Naive thymus-derived CD4-positive, alpha-beta T cell (primary cell): ENCODE measurements at regions of chr15 and their contacts with region 1.

Region 1: GRCh38 chr15:31435261-31435911 is 108.8 kb downstream of the KLF13 start:
- DNase-seq: peak; percentile 53 to 93 (median 87)
- ATAC-seq: peak; percentile 84
- H3K4me3 ChIP-seq: peak overlapping the region; percentile 48
- H3K4me3 Mint-ChIP-seq: peak overlapping the region; percentile 80 to 95 (median 86)
- H3K27ac ChIP-seq: peak overlapping the region; percentile 83
- H3K27ac Mint-ChIP-seq: peak overlapping the region; percentile 96 to 100 (median 99)
- H3K4me1 ChIP-seq: peaks cover 55 to 58% of the 10 kb centered on the region in 2 donors
- H3K4me1 Mint-ChIP-seq: peaks cover 44 to 90% (median 84%) of the 10 kb centered on the region in 7 donors
- H3K27me3 ChIP-seq: no peaks in the 10 kb centered on the region
- H3K27me3 Mint-ChIP-seq: no peaks in the 10 kb centered on the region

Region 2: DNA sequence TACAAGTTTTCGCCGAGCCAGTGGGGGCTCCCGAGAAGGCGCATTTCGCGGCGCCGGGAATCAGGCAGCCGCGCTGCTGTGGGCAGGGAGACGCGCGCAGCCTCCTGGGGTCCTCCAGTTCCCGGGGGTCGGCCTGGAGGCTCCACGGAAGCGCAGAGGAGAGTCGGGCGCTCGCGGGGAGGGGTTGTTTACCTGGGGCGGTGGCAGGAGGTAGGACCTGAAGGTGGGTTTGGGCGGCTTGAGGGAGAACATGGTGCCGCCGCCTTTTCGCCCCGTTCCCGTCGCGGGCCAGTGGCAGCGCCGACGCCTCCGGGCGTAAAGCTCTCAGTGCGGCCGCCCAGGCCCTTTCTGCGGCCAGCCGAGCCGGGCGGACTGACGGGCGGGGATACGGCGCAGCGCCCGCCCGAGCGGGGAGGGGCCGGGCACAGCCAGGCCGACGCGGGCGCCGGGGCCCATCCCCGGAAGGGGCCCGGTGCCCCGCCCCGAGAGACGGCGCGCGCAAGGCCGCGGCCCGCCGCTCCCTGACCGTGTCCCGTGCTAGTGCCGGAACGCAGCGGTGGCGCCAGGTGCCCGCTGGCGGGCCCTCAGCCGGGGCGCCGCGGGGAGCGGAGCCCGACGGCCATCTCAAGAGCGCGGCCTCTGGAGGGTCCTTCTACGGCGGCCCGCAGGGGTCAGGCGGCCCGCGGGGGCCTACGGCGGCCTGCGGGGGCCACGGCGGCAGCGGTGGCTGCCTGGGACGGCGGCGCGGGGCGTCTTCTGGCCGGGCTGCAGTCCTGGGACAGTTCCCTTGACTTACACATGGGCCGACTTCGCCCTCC is 443.9 kb before region 1 on chr15 and contains the start of gene MTMR10:
- CTCF ChIA-PET with region 1: no interaction called
- POLR2A ChIA-PET with region 1: no interaction called
- intact Hi-C with region 1: loop called in 1 of 2 experiments (anchors 1 kb)
- DNase-seq: peak; percentile 54 to 84 (median 82)
- ATAC-seq: peak; percentile 96
- H3K4me3 ChIP-seq: peak within 1 kb of the TSS; percentile 96
- H3K4me3 Mint-ChIP-seq: peak within 1 kb of the TSS; percentile 91 to 97 (median 95)
- H3K27ac ChIP-seq: peak within 1 kb of the TSS; percentile 89
- H3K27ac Mint-ChIP-seq: peak within 1 kb of the TSS; percentile 90 to 98 (median 93)
- H3K4me1 ChIP-seq: peaks cover 23 to 27% of the 10 kb centered on the region in 2 donors
- H3K4me1 Mint-ChIP-seq: peaks cover 22 to 49% (median 37%) of the 10 kb centered on the region in 7 donors
- H3K27me3 ChIP-seq: no peaks in the 10 kb centered on the region
- H3K27me3 Mint-ChIP-seq: peaks cover 0 to 13% (median 0%) of the 10 kb centered on the region in 5 donors
- total RNA-seq, gene MTMR10: 21.2 to 50.8 (median 34.0) TPM

Region 3: GRCh38 chr15:31241888-31242522 is 193.4 kb before region 1 on chr15:
- CTCF ChIA-PET with region 1: no interaction called
- POLR2A ChIA-PET with region 1: interaction called, 3 read pairs
- intact Hi-C with region 1: loop called in 1 of 2 experiments (anchors 1 kb)
- DNase-seq: peak in 5 of 9 donors; percentile 47 to 78 (median 65)
- ATAC-seq: peak; percentile 95
- H3K4me3 ChIP-seq: no peak overlapping the region
- H3K4me3 Mint-ChIP-seq: peak overlapping the region; percentile 2 to 74 (median 50)
- H3K27ac ChIP-seq: peak overlapping the region; percentile 32
- H3K27ac Mint-ChIP-seq: peak overlapping the region; percentile 36 to 97 (median 90)
- H3K4me1 ChIP-seq: peaks cover 13 to 28% of the 10 kb centered on the region in 2 donors
- H3K4me1 Mint-ChIP-seq: peaks cover 34 to 49% (median 42%) of the 10 kb centered on the region in 7 donors
- H3K27me3 ChIP-seq: no peaks in the 10 kb centered on the region
- H3K27me3 Mint-ChIP-seq: peaks cover 0 to 3% (median 0%) of the 10 kb centered on the region in 5 donors

Region 4: GRCh38 chr15:31365655-31366127 is 69.7 kb before region 1 on chr15:
- CTCF ChIA-PET with region 1: interaction called, 54 read pairs
- POLR2A ChIA-PET with region 1: interaction called, 210 read pairs
- intact Hi-C with region 1: loop called (anchors 1 kb)
- DNase-seq: peak; percentile 53 to 82 (median 78)
- ATAC-seq: peak; percentile 68
- H3K4me3 ChIP-seq: peak overlapping the region; percentile 36
- H3K4me3 Mint-ChIP-seq: peak overlapping the region; percentile 72 to 88 (median 85)
- H3K27ac ChIP-seq: peak overlapping the region; percentile 94
- H3K27ac Mint-ChIP-seq: peak overlapping the region; percentile 92 to 99 (median 97)
- H3K4me1 ChIP-seq: peaks cover 87% of the 10 kb centered on the region in 2 donors
- H3K4me1 Mint-ChIP-seq: peaks cover 85 to 100% (median 99%) of the 10 kb centered on the region in 7 donors
- H3K27me3 ChIP-seq: no peaks in the 10 kb centered on the region
- H3K27me3 Mint-ChIP-seq: no peaks in the 10 kb centered on the region

Region 5: DNA sequence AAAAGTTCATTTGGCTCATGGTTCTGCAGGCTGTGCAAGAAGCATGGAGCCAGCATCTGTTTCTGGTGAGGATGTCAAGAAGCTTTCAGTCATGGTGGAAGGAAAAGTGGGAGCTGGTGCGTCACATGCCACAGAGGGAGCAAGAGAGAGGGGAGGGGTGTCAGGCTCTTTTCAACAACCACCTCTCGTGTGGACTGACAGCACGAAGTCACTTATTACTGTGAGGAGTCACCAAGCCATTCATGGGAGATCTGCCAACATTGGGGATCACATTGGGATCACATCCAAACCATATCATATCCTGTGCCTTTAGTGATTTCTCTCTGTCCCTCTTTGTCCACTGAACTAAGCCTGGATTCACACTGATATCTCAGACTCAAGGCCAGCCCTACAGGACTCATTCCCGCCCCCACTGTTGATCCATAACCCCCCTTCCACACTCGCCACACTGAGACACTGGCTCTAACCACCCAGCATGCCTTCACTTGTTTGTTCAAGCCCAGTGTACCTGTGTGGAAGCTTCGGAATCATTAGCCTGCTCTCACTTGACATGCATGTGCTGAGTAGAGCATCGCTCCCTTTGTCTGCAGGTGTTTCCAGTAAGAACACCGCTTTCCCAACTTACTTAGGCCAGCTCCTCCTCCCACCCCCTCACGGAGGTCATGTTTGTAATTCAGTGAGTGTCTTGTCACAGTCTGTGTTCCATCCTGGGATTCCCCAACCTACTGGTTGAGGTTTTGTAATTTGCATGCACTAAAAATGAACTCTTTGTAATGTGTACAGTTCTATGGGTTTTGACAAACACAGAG is 23.4 kb after region 1 on chr15:
- CTCF ChIA-PET with region 1: interaction called, 4 read pairs
- POLR2A ChIA-PET with region 1: interaction called, 17 read pairs
- intact Hi-C with region 1: loop called (anchors 1 to 2 kb)
- DNase-seq: peak in 3 of 9 donors; percentile 19 to 64 (median 32)
- ATAC-seq: peak; percentile 83
- H3K4me3 ChIP-seq: no peak overlapping the region
- H3K4me3 Mint-ChIP-seq: peak overlapping the region in 4 of 10 donors; percentile 0 to 72 (median 4)
- H3K27ac ChIP-seq: no peak overlapping the region
- H3K27ac Mint-ChIP-seq: peak overlapping the region in 7 of 9 donors; percentile 4 to 82 (median 70)
- H3K4me1 ChIP-seq: peaks cover 0 to 8% of the 10 kb centered on the region in 2 donors
- H3K4me1 Mint-ChIP-seq: peaks cover 5 to 33% (median 28%) of the 10 kb centered on the region in 7 donors
- H3K27me3 ChIP-seq: no peaks in the 10 kb centered on the region
- H3K27me3 Mint-ChIP-seq: no peaks in the 10 kb centered on the region

Region 6: GRCh38 chr15:31488426-31489204 is 53.2 kb after region 1 on chr15:
- CTCF ChIA-PET with region 1: interaction called, 65 read pairs
- POLR2A ChIA-PET with region 1: interaction called, 54 read pairs
- intact Hi-C with region 1: loop called (anchors 1 kb)
- DNase-seq: peak; percentile 25 to 70 (median 64)
- ATAC-seq: peak; percentile 78
- H3K4me3 ChIP-seq: no peak overlapping the region
- H3K4me3 Mint-ChIP-seq: peak overlapping the region in 2 of 10 donors; percentile 47 to 65
- H3K27ac ChIP-seq: no peak overlapping the region
- H3K27ac Mint-ChIP-seq: peak overlapping the region in 6 of 9 donors; percentile 14 to 87 (median 68)
- H3K4me1 ChIP-seq: peaks cover 23 to 26% of the 10 kb centered on the region in 2 donors
- H3K4me1 Mint-ChIP-seq: peaks cover 14 to 71% (median 28%) of the 10 kb centered on the region in 7 donors
- H3K27me3 ChIP-seq: no peaks in the 10 kb centered on the region
- H3K27me3 Mint-ChIP-seq: no peaks in the 10 kb centered on the region

Region 7: GRCh38 chr15:31740203-31740602 is 304.8 kb after region 1 on chr15:
- CTCF ChIA-PET with region 1: no interaction called
- POLR2A ChIA-PET with region 1: no interaction called
- intact Hi-C with region 1: no loop called
- DNase-seq: no peak
- ATAC-seq: no peak
- H3K4me3 ChIP-seq: no peak overlapping the region
- H3K4me3 Mint-ChIP-seq: no peak overlapping the region
- H3K27ac ChIP-seq: no peak overlapping the region
- H3K27ac Mint-ChIP-seq: no peak overlapping the region
- H3K4me1 ChIP-seq: no peaks in the 10 kb centered on the region
- H3K4me1 Mint-ChIP-seq: no peaks in the 10 kb centered on the region
- H3K27me3 ChIP-seq: no peaks in the 10 kb centered on the region
- H3K27me3 Mint-ChIP-seq: peaks cover 9 to 49% (median 23%) of the 10 kb centered on the region in 5 donors

Region 8: GRCh38 chr15:31870328-31871165 is 435.2 kb after region 1 on chr15:
- CTCF ChIA-PET with region 1: no interaction called
- POLR2A ChIA-PET with region 1: no interaction called
- intact Hi-C with region 1: no loop called
- DNase-seq: peak; percentile 78 to 92 (median 89)
- ATAC-seq: peak; percentile 94
- H3K4me3 ChIP-seq: peak within 1 kb of the TSS; percentile 72
- H3K4me3 Mint-ChIP-seq: peak within 1 kb of the TSS; percentile 90 to 98 (median 95)
- H3K27ac ChIP-seq: peak within 1 kb of the TSS; percentile 62
- H3K27ac Mint-ChIP-seq: peak within 1 kb of the TSS; percentile 59 to 98 (median 92)
- H3K4me1 ChIP-seq: peaks cover 5 to 7% of the 10 kb centered on the region in 2 donors
- H3K4me1 Mint-ChIP-seq: peaks cover 11 to 23% (median 14%) of the 10 kb centered on the region in 7 donors
- H3K27me3 ChIP-seq: no peaks in the 10 kb centered on the region
- H3K27me3 Mint-ChIP-seq: peaks cover 4 to 56% (median 11%) of the 10 kb centered on the region in 5 donors